Transverse colon (tissue), 4 donors: ENCODE measurements at regions of chr3 and their contacts with region 1.

Region 1: GRCh38 chr3:145704020-145704419 is 457.0 kb downstream of the PLOD2 start:
- DNase-seq: no peak
- H3K4me3 ChIP-seq: no peak overlapping the region
- H3K27ac ChIP-seq: no peak overlapping the region
- H3K4me1 ChIP-seq: no peaks in the 10 kb centered on the region
- H3K27me3 ChIP-seq: no peaks in the 10 kb centered on the region
- CTCF ChIP-seq: no peak
- EP300 ChIP-seq: no peak
- POLR2A ChIP-seq: no peak

Region 2: GRCh38 chr3:145533696-145534095 is 170.3 kb before region 1 on chr3:
- in situ Hi-C with region 1: no loop called
- intact Hi-C with region 1: no loop called
- DNase-seq: no peak
- H3K4me3 ChIP-seq: no peak overlapping the region
- H3K27ac ChIP-seq: no peak overlapping the region
- H3K4me1 ChIP-seq: no peaks in the 10 kb centered on the region
- H3K27me3 ChIP-seq: no peaks in the 10 kb centered on the region
- CTCF ChIP-seq: no peak
- EP300 ChIP-seq: no peak
- POLR2A ChIP-seq: no peak

Region 3: GRCh38 chr3:145639875-145640274 is 64.1 kb before region 1 on chr3:
- in situ Hi-C with region 1: no loop called
- intact Hi-C with region 1: loop called (anchors 2 kb)
- DNase-seq: no peak
- H3K4me3 ChIP-seq: no peak overlapping the region
- H3K27ac ChIP-seq: no peak overlapping the region
- H3K4me1 ChIP-seq: no peaks in the 10 kb centered on the region
- H3K27me3 ChIP-seq: no peaks in the 10 kb centered on the region
- CTCF ChIP-seq: no peak
- EP300 ChIP-seq: no peak
- POLR2A ChIP-seq: no peak